Right cardiac atrium (tissue), 5 donors: ENCODE measurements at regions of chr12 and their contacts with region 1.

Region 1: DNA sequence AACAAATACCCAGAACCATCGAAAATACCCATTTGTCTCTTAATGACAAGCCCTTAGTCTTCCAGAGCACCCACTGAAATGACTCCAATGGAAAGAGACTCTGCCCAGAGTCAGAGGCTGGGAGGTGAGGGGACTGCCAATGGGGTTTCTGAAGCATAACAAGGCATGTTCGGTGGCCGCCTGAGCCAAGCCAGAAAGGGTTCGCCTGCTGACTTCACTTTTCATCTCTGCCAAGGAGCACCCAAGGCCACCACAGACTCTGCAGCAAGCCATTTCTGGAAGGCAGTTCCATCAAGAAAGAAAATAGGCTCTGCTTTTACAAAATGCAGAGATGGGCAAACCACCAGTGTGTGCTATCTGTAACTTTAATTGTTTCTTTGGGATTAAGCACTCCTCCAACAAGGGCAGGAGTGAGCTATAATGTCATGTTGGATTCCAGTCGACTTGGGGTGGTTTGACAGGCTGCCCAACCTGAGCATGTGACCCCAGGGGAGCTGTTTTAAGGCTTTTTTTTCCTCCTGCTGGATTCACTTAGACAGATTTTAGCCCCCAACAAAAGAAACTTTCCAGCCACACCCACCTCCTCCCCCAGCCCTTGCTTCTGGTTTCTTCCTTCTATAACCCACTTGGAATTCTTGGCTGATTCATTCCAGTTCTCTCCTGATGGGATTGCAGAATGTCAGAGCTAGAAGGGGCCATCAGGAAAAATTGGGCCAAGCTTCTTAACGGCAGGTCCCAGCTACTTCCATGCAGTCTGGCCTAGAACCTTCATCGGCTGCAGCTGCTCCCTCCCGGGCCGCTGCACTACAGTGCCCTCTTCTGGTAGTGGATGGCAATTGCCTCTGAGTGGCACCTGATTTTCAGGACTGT is 24.1 kb downstream of the CKAP4 start:
- DNase-seq: peak; percentile 57 to 85 (median 80)
- ATAC-seq: peak; percentile 79 to 82
- H3K4me3 ChIP-seq: no peak overlapping the region
- H3K27ac ChIP-seq: no peak overlapping the region
- H3K4me1 ChIP-seq: no peaks in the 10 kb centered on the region
- H3K27me3 ChIP-seq: no peaks in the 10 kb centered on the region

Region 2: DNA sequence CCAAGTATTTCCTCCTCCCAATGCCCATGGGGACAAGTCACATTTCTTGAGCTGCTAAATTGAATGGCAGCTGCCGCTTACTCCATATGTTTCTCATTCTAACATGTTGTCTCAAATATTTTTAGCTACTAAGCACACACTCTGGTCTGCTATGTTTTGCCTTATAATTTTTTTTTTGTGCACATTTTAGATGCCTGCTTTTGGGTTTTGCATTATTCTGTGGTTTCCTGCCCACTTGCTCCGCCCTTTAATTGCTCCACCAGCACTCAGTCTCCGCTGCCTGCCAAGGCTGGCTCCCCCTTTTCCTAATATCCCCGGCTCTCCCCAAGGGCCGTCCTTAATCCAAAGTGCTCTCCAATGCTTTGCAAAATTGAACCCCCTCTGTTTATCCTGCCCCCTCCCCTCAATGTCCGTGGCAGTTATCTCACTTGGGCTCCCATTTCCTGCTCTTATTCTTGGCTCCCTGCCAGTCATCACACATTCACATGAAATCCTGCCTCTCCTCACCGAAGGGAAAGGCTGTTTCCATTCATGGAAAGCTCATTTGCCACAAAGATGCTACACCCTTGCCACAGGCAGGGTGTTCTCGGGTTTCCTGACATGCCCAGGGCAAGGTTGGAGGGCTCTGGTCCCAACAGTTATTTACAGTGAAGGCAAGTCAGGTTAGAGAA is 813.8 kb before region 1 on chr12:
- intact Hi-C with region 1: loop called in 1 of 4 experiments (anchors 10 kb)
- DNase-seq: peak; percentile 69 to 89 (median 85)
- ATAC-seq: peak; percentile 91 to 94
- H3K4me3 ChIP-seq: peak overlapping the region; percentile 7
- H3K27ac ChIP-seq: peak overlapping the region; percentile 59
- H3K4me1 ChIP-seq: peaks cover 5% of the 10 kb centered on the region
- H3K27me3 ChIP-seq: no peaks in the 10 kb centered on the region

Region 3: DNA sequence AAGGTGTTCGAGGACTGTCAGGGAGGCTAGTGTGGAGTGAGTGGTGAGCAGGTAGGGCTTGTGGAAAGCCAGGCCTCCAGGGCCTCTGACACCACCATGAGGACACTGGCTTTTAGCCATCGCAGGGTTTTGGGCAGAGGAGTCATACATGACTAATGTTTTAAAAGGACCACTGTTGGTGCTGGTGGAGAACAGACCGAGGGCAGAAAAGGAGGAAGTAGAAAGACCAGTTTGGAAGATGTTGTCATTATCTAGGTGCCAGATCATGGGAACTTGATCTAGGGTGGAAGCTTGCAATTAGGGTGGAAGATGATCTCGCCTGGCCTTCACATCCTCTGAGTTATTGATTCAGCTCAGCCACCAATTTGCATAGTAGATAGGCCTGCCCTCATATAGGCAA is 749.0 kb before region 1 on chr12:
- intact Hi-C with region 1: no loop called
- DNase-seq: no peak
- ATAC-seq: no peak
- H3K4me3 ChIP-seq: no peak overlapping the region
- H3K27ac ChIP-seq: no peak overlapping the region
- H3K4me1 ChIP-seq: no peaks in the 10 kb centered on the region
- H3K27me3 ChIP-seq: no peaks in the 10 kb centered on the region

Region 4: DNA sequence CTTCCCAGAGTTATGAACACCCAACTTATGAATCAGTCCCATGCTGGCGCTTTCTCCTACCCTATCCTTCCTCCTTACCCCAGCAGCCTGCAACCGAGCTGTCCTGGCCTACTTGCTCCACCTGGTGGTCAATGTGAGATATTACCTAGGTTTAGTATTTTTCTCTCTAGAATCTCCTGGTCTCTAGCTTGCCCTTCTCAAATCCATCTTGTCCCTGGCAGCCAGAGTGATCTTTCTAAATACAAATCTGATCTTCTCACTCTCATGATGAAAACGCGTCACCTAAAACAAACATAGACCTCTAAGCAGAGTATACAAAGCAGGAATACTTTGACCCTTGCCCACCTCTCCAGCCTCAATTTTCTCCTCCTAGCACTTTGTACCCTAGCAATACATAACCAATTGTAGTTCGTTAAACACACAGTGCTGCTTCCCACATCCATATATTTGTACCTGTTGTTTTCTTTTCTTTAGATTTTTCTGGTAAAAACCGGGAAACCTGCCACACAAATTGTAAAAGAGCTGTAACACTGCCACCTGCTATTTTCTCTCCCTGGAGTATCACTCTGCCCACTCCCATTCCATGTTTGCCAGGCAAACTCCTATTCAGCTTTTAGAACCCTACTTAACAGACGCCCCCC is 58.9 kb after region 1 on chr12:
- intact Hi-C with region 1: loop called (anchors 5 to 10 kb)
- DNase-seq: peak in 1 of 3 donors; percentile 22
- ATAC-seq: peak; percentile 48 to 73
- H3K4me3 ChIP-seq: no peak overlapping the region
- H3K27ac ChIP-seq: no peak overlapping the region
- H3K4me1 ChIP-seq: peaks cover 3% of the 10 kb centered on the region
- H3K27me3 ChIP-seq: no peaks in the 10 kb centered on the region

Region 5: GRCh38 chr12:106357549-106358395 is 134.1 kb after region 1 on chr12 and contains the start of gene POLR3B:
- intact Hi-C with region 1: loop called in 2 of 4 experiments (anchors 5 to 10 kb)
- DNase-seq: peak; percentile 96 to 98 (median 97)
- ATAC-seq: peak; percentile 94 to 96
- H3K4me3 ChIP-seq: peak within 1 kb of the TSS; percentile 71
- H3K27ac ChIP-seq: peak within 1 kb of the TSS; percentile 94
- H3K4me1 ChIP-seq: peaks cover 2% of the 10 kb centered on the region
- H3K27me3 ChIP-seq: no peaks in the 10 kb centered on the region
- total RNA-seq, gene POLR3B: 7.1 to 8.6 (median 7.9) TPM